ENCODE measurements at regions of chr10 and their contacts with region 1.

Region 1: GRCh38 chr10:5813287-5814109 is at the start of gene GDI2:
- DNase-seq: peak; percentile 97
- H3K4me3 Mint-ChIP-seq: peak within 1 kb of the TSS; percentile 95
- H3K27ac Mint-ChIP-seq: peak within 1 kb of the TSS; percentile 91
- H3K4me1 Mint-ChIP-seq: peaks cover 69% of the 10 kb centered on the region
- H3K27me3 Mint-ChIP-seq: no peaks in the 10 kb centered on the region
- total RNA-seq, gene GDI2: 288 and 290 TPM in 2 replicates

Region 2: GRCh38 chr10:4825851-4826665 is 987.4 kb before region 1 on chr10 and contains the start of gene AKR1E2:
- intact Hi-C with region 1: loop called (anchors 10 kb)
- DNase-seq: peak; percentile 82
- H3K4me3 Mint-ChIP-seq: peak within 1 kb of the TSS; percentile 82
- H3K27ac Mint-ChIP-seq: peak within 1 kb of the TSS; percentile 69
- H3K4me1 Mint-ChIP-seq: peaks cover 21% of the 10 kb centered on the region
- H3K27me3 Mint-ChIP-seq: peaks cover 45% of the 10 kb centered on the region
- total RNA-seq, gene AKR1E2: 6.2 and 6.6 TPM in 2 replicates

Region 3: DNA sequence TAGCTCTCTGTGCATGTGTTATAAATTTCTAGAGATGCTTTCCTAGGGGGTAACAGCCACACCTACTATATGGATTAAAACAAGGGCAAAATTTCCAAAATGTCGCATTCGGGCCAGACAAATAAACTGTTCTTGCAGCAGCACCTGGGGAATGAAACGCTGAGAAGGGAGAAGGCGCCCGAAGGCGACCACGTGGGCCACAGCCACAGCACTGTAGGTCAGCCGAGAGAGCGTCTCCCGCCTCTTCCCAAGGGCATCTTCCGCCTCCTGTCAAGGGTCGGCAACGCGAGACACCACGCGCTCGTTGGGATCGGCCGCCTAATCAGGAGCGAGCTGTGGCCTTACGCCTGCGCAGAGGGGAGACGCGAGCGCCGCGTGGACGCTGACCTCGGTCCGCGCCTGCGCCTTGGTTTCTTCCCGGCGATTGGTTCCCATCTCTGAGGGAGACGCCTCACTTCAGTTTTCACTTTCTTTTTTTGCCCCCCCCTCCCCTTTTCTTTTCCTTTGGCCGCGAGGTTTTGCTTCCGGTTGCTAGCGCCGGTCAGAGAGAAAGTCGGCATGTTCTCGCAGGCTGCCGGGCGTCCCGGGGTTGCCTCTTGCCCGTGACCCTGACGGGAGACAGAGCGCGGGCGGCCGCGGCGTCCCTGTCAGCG is 129.1 kb before region 1 on chr10 and contains the start of gene TASOR2:
- intact Hi-C with region 1: loop called (anchors 1 kb)
- DNase-seq: peak; percentile 96
- H3K4me3 Mint-ChIP-seq: peak within 1 kb of the TSS; percentile 97
- H3K27ac Mint-ChIP-seq: peak within 1 kb of the TSS; percentile 97
- H3K4me1 Mint-ChIP-seq: peaks cover 62% of the 10 kb centered on the region
- H3K27me3 Mint-ChIP-seq: no peaks in the 10 kb centered on the region
- total RNA-seq, gene TASOR2: 89.2 and 90.9 TPM in 2 replicates

Region 4: DNA sequence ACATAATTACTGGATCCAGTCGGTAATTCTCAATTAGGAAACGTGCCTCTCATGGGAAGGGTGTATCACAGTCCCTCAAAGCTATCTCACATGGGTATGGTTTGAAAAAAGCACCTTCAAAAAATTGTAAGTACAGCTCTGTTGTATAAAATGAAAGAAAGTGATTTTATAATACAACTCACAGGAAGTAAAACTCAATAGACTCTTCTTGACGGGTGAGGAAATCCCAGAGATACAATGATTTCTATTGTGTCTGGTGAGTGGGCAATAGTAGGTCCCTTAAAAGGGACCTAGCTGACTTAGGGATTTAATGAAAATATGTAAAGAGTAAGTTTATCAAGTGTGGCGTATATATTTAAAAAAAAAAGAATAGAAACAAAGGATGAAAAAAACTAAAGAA is 101.9 kb before region 1 on chr10:
- intact Hi-C with region 1: no loop called
- DNase-seq: no peak
- H3K4me3 Mint-ChIP-seq: peak overlapping the region; percentile 52
- H3K27ac Mint-ChIP-seq: no peak overlapping the region
- H3K4me1 Mint-ChIP-seq: peaks cover 45% of the 10 kb centered on the region
- H3K27me3 Mint-ChIP-seq: no peaks in the 10 kb centered on the region

Region 5: DNA sequence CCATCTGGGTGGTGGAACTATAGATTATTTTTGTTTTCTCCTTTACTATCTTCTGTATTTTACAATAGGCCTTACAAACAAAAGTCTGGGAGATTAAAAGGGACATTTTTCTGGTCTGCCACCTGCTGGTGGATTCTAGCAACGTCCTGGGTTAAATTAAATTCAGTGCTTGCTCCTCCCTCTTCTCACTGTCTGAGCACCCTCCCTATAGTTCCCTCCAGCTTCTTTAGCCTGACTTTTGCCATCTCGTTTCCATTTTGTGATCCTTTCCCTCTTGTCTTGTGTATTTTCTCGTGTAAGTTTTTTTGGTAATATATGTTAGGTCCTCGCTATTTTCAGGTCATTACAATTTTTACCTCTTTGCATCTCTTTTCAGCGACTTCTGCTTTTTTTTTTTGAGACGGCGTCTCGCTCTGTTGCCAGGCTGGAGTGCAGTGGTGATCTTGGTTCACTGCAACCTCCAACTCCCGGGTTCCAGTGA is 60.1 kb after region 1 on chr10:
- intact Hi-C with region 1: loop called (anchors 1 kb)
- DNase-seq: peak; percentile 59
- H3K4me3 Mint-ChIP-seq: peak overlapping the region; percentile 43
- H3K27ac Mint-ChIP-seq: no peak overlapping the region
- H3K4me1 Mint-ChIP-seq: peaks cover 6% of the 10 kb centered on the region
- H3K27me3 Mint-ChIP-seq: no peaks in the 10 kb centered on the region

Region 6: GRCh38 chr10:6014241-6014761 is 200.8 kb after region 1 on chr10:
- intact Hi-C with region 1: loop called (anchors 5 kb)
- DNase-seq: peak; percentile 30
- H3K4me3 Mint-ChIP-seq: peak overlapping the region; percentile 13
- H3K27ac Mint-ChIP-seq: peak overlapping the region; percentile 78
- H3K4me1 Mint-ChIP-seq: peaks cover 74% of the 10 kb centered on the region
- H3K27me3 Mint-ChIP-seq: no peaks in the 10 kb centered on the region

Region 7: GRCh38 chr10:6144406-6145165 is 331.1 kb after region 1 on chr10:
- intact Hi-C with region 1: loop called (anchors 5 kb)
- DNase-seq: peak; percentile 89
- H3K4me3 Mint-ChIP-seq: peak overlapping the region; percentile 85
- H3K27ac Mint-ChIP-seq: peak overlapping the region; percentile 86
- H3K4me1 Mint-ChIP-seq: peaks cover 82% of the 10 kb centered on the region
- H3K27me3 Mint-ChIP-seq: no peaks in the 10 kb centered on the region

Measured in activated T-helper 1 cell treated with anti-CD3 and anti-CD28 coated beads, Interleukin-12 subunit alpha, Interleukin-12 subunit beta, Interleukin-2, Interleukin-4 antibody, amounts not matched to agents 30 ng/mL and 10 ng/mL and 1 ng/mL, durations not matched to agents 14 hours and 24 hours and 36 hours (primary cell).